Activated T-helper 1 cell treated with anti-CD3 and anti-CD28 coated beads, Interleukin-12 subunit alpha, Interleukin-12 subunit beta, Interleukin-2, Interleukin-4 antibody, amounts not matched to agents 30 ng/mL and 10 ng/mL and 1 ng/mL, durations not matched to agents 14 hours and 24 hours and 36 hours (primary cell): ENCODE measurements at regions of chr14 and their contacts with region 1.

Region 1: GRCh38 chr14:68795597-68796417 is 2.9 kb upstream of the ZFP36L1 start:
- DNase-seq: peak; percentile 80
- H3K4me3 Mint-ChIP-seq: peak overlapping the region; percentile 84
- H3K27ac Mint-ChIP-seq: peak overlapping the region; percentile 95
- H3K4me1 Mint-ChIP-seq: peaks cover 51% of the 10 kb centered on the region
- H3K27me3 Mint-ChIP-seq: no peaks in the 10 kb centered on the region

Region 2: DNA sequence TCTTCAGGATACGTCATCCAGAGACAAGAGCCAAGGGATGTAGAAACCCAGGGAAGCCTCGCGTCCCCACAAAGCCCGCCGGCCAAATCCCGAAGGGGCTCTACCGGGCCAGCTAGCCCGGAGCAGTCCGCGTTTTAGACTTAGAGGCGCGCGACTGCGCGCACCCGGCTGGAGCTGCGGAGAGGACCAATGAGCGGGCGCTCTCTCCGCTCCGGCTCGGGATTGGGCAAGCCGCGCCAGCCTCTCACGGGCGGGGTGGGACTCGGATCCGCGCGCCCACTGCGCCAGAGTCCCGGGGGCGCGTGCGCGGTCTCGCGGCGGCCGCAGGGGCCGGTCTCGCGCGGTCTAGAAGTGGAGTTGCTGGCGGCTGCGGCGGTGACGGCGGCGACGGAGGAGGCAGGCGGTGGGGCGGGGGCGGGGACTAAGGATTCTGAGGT is 1554.8 kb before region 1 on chr14:
- intact Hi-C with region 1: loop called (anchors 10 kb)
- DNase-seq: peak; percentile 92
- H3K4me3 Mint-ChIP-seq: peak overlapping the region; percentile 87
- H3K27ac Mint-ChIP-seq: peak overlapping the region; percentile 80
- H3K4me1 Mint-ChIP-seq: peaks cover 18% of the 10 kb centered on the region
- H3K27me3 Mint-ChIP-seq: peaks cover 20% of the 10 kb centered on the region

Region 3: DNA sequence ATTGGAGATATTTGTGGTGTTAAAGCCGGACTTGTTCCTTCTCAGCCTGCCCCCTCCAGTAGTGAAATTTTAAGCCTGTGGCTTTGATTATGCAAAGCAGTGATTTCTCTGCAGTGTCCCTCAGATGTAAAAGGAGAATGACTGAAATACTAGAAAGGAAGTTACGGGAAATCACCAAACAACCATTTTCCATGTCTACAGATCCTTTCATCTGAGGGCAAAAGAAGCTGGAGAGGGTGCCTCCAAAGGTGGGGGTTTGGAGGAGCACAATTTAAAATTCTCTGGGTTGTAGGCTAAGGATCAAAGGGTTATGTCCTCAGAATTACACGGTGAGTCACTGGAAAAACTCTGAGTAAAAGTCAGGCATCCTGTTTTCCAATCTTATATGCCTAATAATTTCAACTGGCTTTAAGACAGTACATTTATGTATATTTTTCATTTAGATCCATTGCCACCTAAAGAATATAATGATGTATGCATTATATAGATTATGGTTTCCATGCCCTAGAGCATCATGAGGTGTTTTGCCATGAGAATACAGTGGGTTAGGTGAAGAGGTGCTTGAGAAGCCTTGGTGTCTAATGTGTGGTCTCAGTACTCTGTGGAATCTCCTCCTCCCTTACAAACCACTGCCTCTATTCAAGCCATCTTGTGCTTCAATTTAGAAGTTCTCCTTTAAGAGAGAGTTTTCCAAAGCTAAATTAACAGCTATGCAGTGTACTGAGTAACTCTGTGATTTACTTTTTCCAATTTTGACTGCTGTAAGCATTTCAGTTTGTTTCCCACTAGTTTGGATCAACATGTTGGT is 614.1 kb before region 1 on chr14:
- intact Hi-C with region 1: loop called (anchors 2 kb)
- DNase-seq: no peak
- H3K4me3 Mint-ChIP-seq: no peak overlapping the region
- H3K27ac Mint-ChIP-seq: no peak overlapping the region
- H3K4me1 Mint-ChIP-seq: peaks cover 30% of the 10 kb centered on the region
- H3K27me3 Mint-ChIP-seq: no peaks in the 10 kb centered on the region

Region 4: DNA sequence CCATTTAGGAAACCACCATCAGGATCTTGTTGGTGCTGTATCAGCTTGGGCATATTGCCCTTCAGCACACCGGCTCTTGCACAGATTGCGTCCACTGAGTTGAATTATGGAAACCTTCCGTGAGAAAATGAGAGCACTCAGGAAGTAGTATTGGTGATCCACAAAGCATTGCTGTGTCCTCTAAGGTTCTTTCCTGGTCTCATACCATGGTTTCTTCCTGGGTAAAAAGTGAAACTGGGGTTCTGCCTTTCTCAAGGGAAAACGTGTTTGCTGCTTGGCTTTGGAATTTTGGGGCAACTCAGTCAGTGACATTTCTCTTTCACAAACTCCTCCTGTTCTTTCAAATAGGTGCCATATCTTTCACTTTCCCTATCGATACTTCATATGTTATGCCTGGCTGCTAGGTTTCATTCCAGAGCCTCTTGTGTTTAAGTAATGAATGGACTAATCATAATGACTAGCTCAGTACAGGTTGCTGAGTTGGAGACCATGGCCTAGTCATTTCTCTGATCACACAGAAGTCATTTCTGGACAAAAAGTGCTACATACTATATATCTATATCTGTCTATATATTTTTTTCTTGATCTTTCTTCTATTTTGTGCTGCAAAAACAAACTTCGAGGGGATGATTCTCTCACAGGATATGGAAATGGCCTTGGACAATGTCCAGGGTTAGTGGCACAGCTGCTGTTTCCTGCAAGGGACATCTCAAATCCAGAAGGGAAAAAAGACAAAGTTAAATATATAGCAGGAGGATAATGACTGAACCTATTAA is 426.3 kb before region 1 on chr14:
- intact Hi-C with region 1: loop called (anchors 1 kb)
- DNase-seq: no peak
- H3K4me3 Mint-ChIP-seq: no peak overlapping the region
- H3K27ac Mint-ChIP-seq: peak overlapping the region; percentile 21
- H3K4me1 Mint-ChIP-seq: peaks cover 23% of the 10 kb centered on the region
- H3K27me3 Mint-ChIP-seq: no peaks in the 10 kb centered on the region

Region 5: DNA sequence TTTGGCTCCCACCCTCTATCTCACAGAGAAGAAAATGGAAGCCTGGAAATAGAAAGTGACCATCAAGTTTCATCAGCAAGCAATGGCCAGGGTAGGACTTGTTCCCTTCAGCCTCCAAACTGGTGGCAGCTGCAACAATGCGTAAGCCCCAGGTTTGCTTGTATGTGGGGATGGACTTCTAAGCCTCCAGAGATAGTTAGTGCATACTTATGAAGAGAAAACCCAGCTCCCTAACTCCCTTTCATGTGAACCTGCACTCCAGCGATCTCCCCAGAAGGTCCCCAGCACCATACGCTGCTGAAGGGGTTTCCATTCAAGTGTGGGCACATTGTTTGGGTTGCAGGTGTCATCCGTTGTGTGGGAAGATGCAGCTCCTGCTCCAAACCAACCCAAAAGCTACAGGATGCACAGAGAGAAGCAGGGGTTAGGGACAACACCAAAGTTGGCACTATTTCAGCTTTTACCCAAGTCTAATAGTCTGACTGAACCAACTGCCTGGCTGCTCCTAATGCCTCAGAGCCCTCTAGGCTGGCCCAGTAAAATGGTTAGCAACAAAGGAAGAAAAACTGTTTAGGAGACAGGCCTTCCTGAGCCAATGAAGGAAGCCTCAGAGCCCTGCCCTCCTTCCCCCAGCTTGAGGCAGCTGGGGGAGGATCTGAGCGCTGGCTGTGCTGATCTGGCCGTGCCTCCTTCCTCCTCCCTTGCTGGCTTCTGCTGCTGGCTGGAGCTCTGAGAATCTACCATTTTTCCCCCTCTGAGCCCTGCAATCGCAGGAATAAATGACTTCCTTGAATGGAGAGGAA is 15.2 kb before region 1 on chr14:
- intact Hi-C with region 1: loop called (anchors 2 kb)
- DNase-seq: no peak
- H3K4me3 Mint-ChIP-seq: peak overlapping the region; percentile 78
- H3K27ac Mint-ChIP-seq: peak overlapping the region; percentile 93
- H3K4me1 Mint-ChIP-seq: peaks cover 72% of the 10 kb centered on the region
- H3K27me3 Mint-ChIP-seq: no peaks in the 10 kb centered on the region

Region 6: GRCh38 chr14:68961781-68962584 is 166.2 kb after region 1 on chr14:
- intact Hi-C with region 1: no loop called
- DNase-seq: no peak
- H3K4me3 Mint-ChIP-seq: no peak overlapping the region
- H3K27ac Mint-ChIP-seq: no peak overlapping the region
- H3K4me1 Mint-ChIP-seq: peaks cover under 1% of the 10 kb centered on the region
- H3K27me3 Mint-ChIP-seq: no peaks in the 10 kb centered on the region

Region 7: DNA sequence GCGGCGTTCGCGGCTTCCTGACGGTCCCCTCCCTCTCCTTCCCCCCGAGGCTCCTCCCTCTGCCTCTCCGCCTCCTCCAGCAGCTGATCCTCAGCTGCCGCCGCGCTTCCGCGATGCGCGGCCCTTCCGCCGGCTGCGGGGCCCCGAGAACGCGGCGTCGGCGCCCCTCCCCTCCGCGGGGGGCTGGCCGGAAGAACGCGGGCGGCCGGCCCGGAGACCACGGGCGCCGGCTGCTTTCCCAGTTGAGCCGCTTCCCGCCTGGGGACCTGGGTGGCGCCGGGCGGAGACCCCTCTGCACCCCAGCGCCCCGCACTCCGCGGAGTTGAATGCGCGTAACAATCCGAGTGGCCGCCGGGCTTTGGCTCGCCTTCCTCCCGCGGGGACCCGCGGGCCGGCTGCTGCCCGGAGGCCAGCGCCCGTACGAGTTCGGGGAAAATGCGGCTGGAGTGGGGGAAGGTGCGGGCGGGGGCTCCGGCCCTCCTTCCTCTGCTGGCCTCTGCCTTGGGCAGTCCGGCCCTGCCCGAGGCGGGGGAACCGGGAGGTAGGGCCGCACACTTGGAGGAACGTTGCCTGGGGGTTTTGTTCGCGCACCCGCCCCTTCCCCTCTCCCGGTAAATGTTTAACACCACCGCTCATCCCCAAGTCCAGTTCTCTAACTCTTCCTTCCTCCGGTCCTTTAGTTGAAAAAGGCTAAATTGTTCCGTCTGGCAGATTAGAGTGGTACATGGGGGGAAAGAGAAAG is 357.5 kb after region 1 on chr14:
- intact Hi-C with region 1: loop called (anchors 5 kb)
- DNase-seq: peak; percentile 90
- H3K4me3 Mint-ChIP-seq: peak overlapping the region; percentile 90
- H3K27ac Mint-ChIP-seq: peak overlapping the region; percentile 92
- H3K4me1 Mint-ChIP-seq: peaks cover 33% of the 10 kb centered on the region
- H3K27me3 Mint-ChIP-seq: peaks cover 39% of the 10 kb centered on the region